ENCODE measurements at regions of chr12 and their contacts with region 1.

Region 1: DNA sequence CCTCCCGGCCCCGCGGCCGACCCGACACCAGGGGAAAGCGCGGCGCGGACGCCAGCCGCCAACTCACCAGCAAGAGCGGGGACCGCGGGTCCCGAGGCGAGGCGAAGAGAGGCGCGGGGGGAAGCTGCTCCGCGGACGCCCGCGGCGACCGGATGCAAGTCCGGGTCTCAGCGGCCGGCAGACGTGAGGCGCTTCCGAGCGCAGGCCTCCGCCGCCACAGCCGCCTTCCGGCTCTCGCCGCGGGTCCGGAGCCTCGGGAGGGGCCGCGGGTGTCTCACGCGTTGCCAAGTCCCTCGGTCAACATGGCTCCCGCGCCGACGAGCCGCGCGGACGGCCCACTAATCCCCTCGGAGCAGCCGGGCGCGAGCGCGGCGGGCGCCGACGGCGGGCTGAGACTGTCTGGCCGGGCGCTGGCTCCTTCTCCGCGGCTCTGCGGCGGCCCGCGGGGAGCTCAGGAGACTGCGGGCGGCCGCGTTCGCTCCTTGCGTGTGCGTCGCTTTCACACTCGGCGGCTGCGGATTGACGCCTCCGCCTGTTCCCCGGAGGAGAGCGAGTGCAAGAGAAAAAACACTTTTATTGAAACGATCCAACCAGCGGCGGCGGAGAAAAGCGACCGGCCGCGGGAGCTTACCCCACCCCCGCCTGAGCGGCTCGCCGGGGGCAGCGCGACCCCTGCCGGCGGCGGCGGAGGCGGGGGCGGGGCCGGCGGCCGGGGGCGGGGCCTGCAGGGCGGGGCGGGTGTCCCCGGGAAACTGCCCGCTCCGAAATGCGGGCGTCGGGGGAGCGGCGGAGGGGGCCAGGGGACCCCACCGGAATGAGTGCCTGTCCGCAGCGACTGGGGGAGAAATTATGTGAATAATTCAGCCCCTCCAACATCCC is at the start of gene CDK17:
- DNase-seq: peak; percentile 91
- ATAC-seq: peak; percentile 66
- H3K4me3 Mint-ChIP-seq: peak within 1 kb of the TSS; percentile 86
- H3K27ac Mint-ChIP-seq: peak within 1 kb of the TSS; percentile 96
- H3K4me1 Mint-ChIP-seq: peaks cover 50% of the 10 kb centered on the region
- H3K27me3 Mint-ChIP-seq: no peaks in the 10 kb centered on the region
- total RNA-seq, gene CDK17: 38.2 to 39.5 TPM

Region 2: GRCh38 chr12:96170328-96170727 is 229.8 kb before region 1 on chr12:
- CTCF ChIA-PET with region 1: no interaction called
- POLR2A ChIA-PET with region 1: no interaction called
- DNase-seq: no peak
- ATAC-seq: no peak
- H3K4me3 Mint-ChIP-seq: no peak overlapping the region
- H3K27ac Mint-ChIP-seq: no peak overlapping the region
- H3K4me1 Mint-ChIP-seq: no peaks in the 10 kb centered on the region
- H3K27me3 Mint-ChIP-seq: peaks cover 5% of the 10 kb centered on the region

Region 3: GRCh38 chr12:96274331-96274730 is 125.8 kb before region 1 on chr12:
- CTCF ChIA-PET with region 1: interaction called, 3 read pairs
- POLR2A ChIA-PET with region 1: interaction called, 12 read pairs
- DNase-seq: no peak
- ATAC-seq: no peak
- H3K4me3 Mint-ChIP-seq: no peak overlapping the region
- H3K27ac Mint-ChIP-seq: no peak overlapping the region
- H3K4me1 Mint-ChIP-seq: peaks cover 3% of the 10 kb centered on the region
- H3K27me3 Mint-ChIP-seq: no peaks in the 10 kb centered on the region

Region 4: DNA sequence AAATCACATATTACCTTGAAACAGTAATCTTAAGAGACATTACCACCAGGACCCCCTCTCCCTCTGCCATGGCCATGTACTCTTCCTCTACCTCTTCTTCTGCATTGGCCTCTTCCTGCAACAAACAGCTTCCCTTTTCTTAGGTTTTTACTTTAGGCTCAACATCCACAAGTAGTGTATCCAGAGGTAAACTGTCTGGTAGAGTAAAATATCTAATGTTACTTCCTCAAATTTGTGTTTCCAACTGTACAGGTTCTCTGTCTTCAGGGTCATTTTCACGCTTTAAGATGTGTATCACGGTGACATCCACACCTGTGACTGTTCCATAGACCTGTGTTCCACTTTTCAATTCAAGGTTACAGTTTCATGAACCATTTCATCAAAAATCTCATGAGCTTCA is 13.4 kb before region 1 on chr12:
- CTCF ChIA-PET with region 1: interaction called, 34 read pairs
- POLR2A ChIA-PET with region 1: interaction called, 12 read pairs
- DNase-seq: no peak
- ATAC-seq: peak; percentile 24
- H3K4me3 Mint-ChIP-seq: no peak overlapping the region
- H3K27ac Mint-ChIP-seq: no peak overlapping the region
- H3K4me1 Mint-ChIP-seq: peaks cover 47% of the 10 kb centered on the region
- H3K27me3 Mint-ChIP-seq: no peaks in the 10 kb centered on the region

Region 5: GRCh38 chr12:96434107-96434506 is 33.9 kb after region 1 on chr12:
- CTCF ChIA-PET with region 1: interaction called, 18 read pairs
- POLR2A ChIA-PET with region 1: interaction called, 12 read pairs
- DNase-seq: peak; percentile 90
- ATAC-seq: peak; percentile 97
- H3K4me3 Mint-ChIP-seq: peak overlapping the region; percentile 5
- H3K27ac Mint-ChIP-seq: peak overlapping the region; percentile 82
- H3K4me1 Mint-ChIP-seq: peaks cover 44% of the 10 kb centered on the region
- H3K27me3 Mint-ChIP-seq: no peaks in the 10 kb centered on the region

Region 6: DNA sequence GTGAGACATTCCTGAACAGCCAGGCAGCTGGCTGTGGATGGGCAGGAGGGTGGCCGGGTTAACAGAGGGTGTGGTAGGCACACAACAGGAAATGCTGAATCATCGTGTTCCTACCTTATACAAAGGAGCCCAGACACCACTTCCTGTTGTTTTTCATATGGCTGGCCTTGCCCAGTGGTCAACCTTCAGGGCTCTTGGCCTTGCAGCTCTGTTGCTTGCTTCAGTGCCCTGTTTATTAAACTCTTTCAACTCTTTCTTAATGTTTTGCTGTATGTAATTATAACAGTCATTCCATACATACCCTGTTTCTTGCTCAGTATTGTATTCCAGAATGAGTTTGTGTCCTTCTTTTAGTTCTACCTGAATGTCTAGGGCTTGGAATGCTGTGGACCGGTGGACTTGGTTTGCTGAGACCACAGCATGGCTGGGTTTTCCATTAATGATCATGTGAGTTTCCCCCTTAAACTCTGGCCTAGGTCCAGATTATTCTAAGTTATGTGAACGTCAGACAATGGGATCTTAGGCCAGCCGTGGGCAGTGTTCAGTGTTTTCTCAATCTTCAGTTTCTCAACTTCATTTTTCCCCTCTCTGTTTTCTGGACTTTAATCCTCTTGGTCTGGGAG is 101.1 kb after region 1 on chr12:
- CTCF ChIA-PET with region 1: interaction called, 9 read pairs
- POLR2A ChIA-PET with region 1: interaction called, 22 read pairs
- DNase-seq: peak; percentile 57
- ATAC-seq: peak; percentile 87
- H3K4me3 Mint-ChIP-seq: peak overlapping the region; percentile 16
- H3K27ac Mint-ChIP-seq: peak overlapping the region; percentile 78
- H3K4me1 Mint-ChIP-seq: peaks cover 52% of the 10 kb centered on the region
- H3K27me3 Mint-ChIP-seq: no peaks in the 10 kb centered on the region